Lower leg skin (tissue), 4 donors: ENCODE measurements at regions of chr9 and their contacts with region 1.

Region 1: DNA sequence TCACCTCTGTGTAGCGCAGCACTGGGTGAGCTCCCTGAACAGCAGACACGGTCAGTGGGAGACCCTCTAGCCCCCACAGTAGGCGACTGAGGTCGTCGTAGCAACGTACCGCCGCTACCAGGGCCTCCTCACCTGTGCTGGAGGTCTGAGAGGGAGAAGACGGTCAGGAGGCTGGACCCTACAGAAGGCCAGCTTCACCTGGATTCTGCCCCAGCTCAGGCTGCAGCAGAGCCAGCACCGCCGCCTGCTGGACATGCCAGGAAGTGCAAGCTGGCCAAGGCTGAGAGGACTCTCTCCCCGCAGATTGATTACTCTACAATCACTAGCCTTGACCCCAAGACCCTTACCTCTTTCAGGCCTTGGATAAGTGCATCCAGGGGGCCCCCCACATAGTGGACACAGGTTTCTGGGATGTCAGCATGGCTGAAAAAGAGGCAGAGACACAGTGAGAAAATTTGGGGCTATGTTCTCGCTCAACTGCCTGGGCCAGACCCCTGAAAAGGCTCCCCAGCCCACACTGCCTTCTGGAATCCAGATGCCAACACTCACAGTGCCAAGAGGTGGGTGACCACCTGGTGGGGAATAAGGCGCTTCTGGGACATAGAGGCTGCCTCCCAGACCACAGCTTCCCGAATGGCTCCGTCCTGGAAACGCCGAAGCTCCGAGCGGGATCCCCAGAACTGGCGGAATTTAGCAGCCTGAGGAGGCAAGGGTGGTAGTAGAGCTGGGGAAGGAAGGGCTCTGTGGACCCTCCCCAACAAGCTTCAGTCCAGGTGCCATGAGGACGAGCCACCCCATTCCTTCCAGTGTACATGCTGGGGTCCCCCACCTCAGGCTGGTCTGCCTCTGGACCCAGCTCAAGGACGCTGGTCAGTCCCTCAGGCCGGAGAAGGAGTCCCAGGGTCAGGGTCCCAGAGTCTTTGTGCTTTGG is 6.9 kb downstream of the NOL6 start:
- DNase-seq: peak in 1 of 2 donors; percentile 93
- H3K4me3 ChIP-seq: no peak overlapping the region
- CTCF ChIP-seq: peak in 1 of 3 donors; percentile 93
- POLR2A ChIP-seq: no peak

Region 2: GRCh38 chr9:33287087-33287490 is 179.7 kb before region 1 on chr9:
- intact Hi-C with region 1: loop called (anchors 10 kb)
- DNase-seq: peak in 1 of 2 donors; percentile 34
- H3K4me3 ChIP-seq: no peak overlapping the region
- CTCF ChIP-seq: no peak
- POLR2A ChIP-seq: no peak

Region 3: DNA sequence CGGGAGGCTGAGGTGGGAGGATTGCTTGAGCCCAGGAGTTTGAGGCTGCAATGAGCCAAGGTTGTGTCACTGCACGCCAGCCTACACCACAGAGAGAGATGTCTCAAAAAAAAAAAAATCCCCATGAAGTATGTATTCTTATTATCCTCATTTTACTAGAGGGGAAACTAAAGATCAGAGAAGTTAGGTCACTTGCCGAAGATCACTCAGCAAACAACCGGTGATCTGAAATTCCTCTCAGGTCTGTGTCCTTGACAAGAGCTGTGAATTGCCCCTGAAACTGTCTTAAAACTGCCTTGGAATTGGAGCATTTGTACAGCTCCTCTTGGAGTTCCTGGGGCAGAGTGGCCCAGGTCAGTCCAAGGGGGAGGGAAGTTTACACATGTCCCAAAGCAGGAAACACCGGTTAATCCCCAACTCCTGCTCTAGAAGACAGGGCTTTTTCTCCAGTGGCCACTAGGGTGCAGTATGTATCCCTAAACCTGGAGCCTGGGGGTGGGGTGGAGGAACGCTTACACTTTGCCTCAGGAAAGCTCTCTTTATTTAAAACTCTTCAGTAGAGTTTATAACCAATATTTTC is 92.1 kb before region 1 on chr9:
- intact Hi-C with region 1: loop called (anchors 10 kb)
- DNase-seq: peak; percentile 74 to 91
- H3K4me3 ChIP-seq: no peak overlapping the region
- CTCF ChIP-seq: peak in 1 of 3 donors; percentile 54
- POLR2A ChIP-seq: no peak

Region 4: DNA sequence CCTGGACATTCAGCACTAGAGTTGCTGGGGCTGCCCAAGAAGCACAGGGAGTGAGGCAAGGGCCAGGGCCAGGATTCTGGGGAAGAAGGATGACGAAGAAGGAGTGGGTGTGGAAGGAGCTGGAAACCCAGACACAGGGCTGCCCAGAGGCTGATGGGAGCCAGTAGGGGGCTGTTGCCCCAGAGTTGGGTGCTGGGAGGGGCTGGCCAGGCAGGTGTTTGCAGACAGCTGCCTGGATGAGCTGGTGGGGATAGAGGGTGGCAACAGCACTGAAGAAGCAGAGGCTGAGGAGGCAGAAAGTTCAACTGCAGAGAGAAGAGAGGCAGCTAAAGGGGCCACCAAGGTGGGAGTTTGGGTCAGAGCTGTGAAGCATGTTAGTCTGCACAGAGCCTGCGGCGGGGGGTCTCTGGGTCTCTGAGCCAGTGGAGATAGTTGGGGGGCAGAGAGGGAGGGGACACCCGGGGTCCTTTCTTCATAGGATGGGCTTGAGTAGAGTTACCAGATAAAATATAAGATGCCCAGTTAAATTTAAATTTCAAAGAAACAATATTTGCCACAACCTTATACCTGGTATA is 62.0 kb before region 1 on chr9:
- intact Hi-C with region 1: loop called (anchors 5 kb)
- DNase-seq: no peak
- H3K4me3 ChIP-seq: no peak overlapping the region
- CTCF ChIP-seq: no peak
- POLR2A ChIP-seq: no peak